ENCODE measurements at regions of chrX and their contacts with region 1.

Region 1: DNA sequence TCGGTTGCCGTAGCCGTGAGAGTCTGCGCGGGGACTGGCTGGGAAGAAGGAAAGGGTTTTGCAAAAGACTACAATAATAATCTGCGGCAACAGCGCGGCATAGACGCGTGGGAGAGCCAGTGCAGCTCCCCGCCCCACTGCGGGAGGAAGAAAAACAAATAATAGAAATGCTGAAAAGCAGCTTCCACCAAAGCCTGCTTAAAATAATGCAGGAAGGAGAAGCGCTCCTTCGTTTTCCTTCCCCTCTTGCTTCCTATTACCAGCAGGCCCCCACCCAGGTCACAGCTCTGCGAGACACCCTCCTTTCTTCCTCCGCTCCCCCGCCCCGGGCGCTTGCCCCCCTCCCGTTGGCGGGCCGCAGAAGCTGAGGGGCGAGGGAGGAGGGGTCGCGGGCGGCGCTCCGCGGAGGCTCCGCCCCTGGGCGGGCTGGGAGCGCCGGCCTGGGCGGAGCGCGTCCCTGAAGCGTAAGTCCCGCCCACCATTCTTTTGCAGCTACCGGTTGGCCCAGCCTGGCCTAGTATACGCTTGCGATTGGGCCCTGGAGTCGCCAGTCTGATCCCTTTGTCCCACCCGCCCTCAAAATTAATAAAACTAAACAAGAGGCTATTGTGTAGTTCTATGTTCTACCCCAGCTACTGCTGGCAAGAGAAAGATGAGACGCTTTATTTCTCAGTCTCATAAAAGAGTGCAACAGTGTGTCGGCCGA is 636 bp upstream of the AMOT start:
- DNase-seq: peak; percentile 87
- ATAC-seq: peak; percentile 97
- H3K4me3 ChIP-seq: peak overlapping the region; percentile 76
- H3K27ac ChIP-seq: peak overlapping the region; percentile 35
- H3K4me1 ChIP-seq: no peaks in the 10 kb centered on the region; the same call in 1 of the 2 replicates
- H3K27me3 ChIP-seq: no peaks in the 10 kb centered on the region; the same call in 1 of the 2 replicates
- CTCF ChIP-seq: no peak
- POLR2A ChIP-seq: no peak
- RAD21 ChIP-seq: no peak

Region 2: GRCh38 chrX:111680988-111681779 is 1160.1 kb before region 1 on chrX and contains the start of gene ALG13:
- CTCF ChIA-PET with region 1: no interaction called
- POLR2A ChIA-PET with region 1: no interaction called
- dilution Hi-C with region 1: no loop called
- in situ Hi-C with region 1: loop called (anchors 25 kb)
- intact Hi-C with region 1: no loop called
- DNase-seq: peak; percentile 90
- ATAC-seq: peak; percentile 96
- H3K4me3 ChIP-seq: peak within 1 kb of the TSS; percentile 44
- H3K27ac ChIP-seq: peak within 1 kb of the TSS; percentile 93
- H3K4me1 ChIP-seq: no peaks in the 10 kb centered on the region
- H3K27me3 ChIP-seq: no peaks in the 10 kb centered on the region
- CTCF ChIP-seq: peak; percentile 74
- POLR2A ChIP-seq: peak; percentile 80
- RAD21 ChIP-seq: no peak
- total RNA-seq, gene ALG13: 38.3 and 42.7 TPM in 2 replicates

Region 3: DNA sequence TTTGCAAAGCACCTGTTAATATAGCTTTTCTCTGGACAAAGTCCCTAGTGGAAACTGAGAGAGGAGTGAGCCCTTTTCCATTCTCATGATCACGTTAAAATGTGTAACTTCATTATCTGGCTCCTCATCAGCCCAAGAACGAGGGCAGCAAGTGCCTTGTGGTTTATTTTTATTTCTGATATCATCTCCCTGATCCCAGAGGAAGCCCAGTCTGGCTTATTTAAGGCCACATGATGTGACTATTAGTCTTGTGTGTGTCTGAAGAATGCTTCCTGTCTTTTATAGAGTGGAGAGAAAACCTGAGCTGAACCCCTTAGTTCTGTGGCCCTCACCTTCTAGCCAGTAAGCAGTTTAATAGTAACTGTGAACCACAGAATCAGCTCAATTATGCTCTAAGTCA is 228.7 kb before region 1 on chrX:
- CTCF ChIA-PET with region 1: no interaction called
- POLR2A ChIA-PET with region 1: no interaction called
- dilution Hi-C with region 1: no loop called
- in situ Hi-C with region 1: no loop called
- intact Hi-C with region 1: no loop called
- DNase-seq: no peak
- ATAC-seq: no peak
- H3K4me3 ChIP-seq: no peak overlapping the region
- H3K27ac ChIP-seq: no peak overlapping the region
- H3K4me1 ChIP-seq: no peaks in the 10 kb centered on the region
- H3K27me3 ChIP-seq: peaks cover 5% of the 10 kb centered on the region; the same call in 1 of the 2 replicates
- CTCF ChIP-seq: no peak
- POLR2A ChIP-seq: no peak
- RAD21 ChIP-seq: no peak

Region 4: GRCh38 chrX:112654871-112655270 is 186.4 kb before region 1 on chrX:
- CTCF ChIA-PET with region 1: no interaction called
- POLR2A ChIA-PET with region 1: no interaction called
- dilution Hi-C with region 1: no loop called
- in situ Hi-C with region 1: no loop called
- intact Hi-C with region 1: loop called (anchors 10 kb)
- DNase-seq: peak; percentile 75
- ATAC-seq: peak; percentile 67
- H3K4me3 ChIP-seq: no peak overlapping the region
- H3K27ac ChIP-seq: no peak overlapping the region
- H3K4me1 ChIP-seq: peaks cover 1% of the 10 kb centered on the region; the same call in 1 of the 2 replicates
- H3K27me3 ChIP-seq: no peaks in the 10 kb centered on the region
- CTCF ChIP-seq: no peak
- POLR2A ChIP-seq: no peak
- RAD21 ChIP-seq: no peak

Region 5: DNA sequence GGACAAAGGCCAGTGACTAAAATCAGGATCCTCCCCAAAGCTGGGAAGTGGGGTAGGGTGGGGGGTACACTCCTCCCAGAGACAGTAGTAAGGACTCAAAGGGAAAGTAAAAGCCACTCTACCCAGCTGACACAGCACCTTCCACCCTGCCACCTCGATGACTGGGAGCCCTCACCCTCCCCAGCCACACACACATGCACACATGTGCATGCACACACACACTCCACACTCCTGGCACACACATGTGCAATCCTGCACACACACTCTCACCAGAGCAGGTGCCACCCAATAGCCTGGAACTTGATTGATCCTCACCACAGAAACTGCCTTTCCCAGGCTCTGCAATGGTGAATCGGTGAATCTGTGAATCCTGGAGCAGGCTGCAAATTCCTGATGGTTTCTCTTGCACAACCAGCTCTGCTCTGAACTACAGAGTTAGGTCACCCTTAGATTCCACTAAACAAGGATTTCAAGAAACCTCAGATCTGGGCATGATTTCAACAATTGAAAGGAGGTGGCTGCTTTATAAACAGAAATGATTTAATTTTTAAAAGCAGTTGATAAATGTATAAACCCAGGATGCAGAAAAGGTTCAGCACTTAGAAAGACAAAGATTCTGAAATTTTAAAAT is 22.1 kb before region 1 on chrX:
- CTCF ChIA-PET with region 1: no interaction called
- POLR2A ChIA-PET with region 1: no interaction called
- dilution Hi-C with region 1: no loop called
- in situ Hi-C with region 1: no loop called
- intact Hi-C with region 1: loop called (anchors 2 kb)
- DNase-seq: peak; percentile 89
- ATAC-seq: peak; percentile 95
- H3K4me3 ChIP-seq: no peak overlapping the region
- H3K27ac ChIP-seq: peak overlapping the region; percentile 19; the same call in 1 of the 2 replicates
- H3K4me1 ChIP-seq: peaks cover 6% of the 10 kb centered on the region
- H3K27me3 ChIP-seq: peaks cover 7% of the 10 kb centered on the region; the same call in 1 of the 2 replicates
- CTCF ChIP-seq: no peak
- POLR2A ChIP-seq: no peak
- RAD21 ChIP-seq: no peak